Colonic mucosa (tissue), 4 donors: ENCODE measurements at regions of chr2 and their contacts with region 1.

Region 1: DNA sequence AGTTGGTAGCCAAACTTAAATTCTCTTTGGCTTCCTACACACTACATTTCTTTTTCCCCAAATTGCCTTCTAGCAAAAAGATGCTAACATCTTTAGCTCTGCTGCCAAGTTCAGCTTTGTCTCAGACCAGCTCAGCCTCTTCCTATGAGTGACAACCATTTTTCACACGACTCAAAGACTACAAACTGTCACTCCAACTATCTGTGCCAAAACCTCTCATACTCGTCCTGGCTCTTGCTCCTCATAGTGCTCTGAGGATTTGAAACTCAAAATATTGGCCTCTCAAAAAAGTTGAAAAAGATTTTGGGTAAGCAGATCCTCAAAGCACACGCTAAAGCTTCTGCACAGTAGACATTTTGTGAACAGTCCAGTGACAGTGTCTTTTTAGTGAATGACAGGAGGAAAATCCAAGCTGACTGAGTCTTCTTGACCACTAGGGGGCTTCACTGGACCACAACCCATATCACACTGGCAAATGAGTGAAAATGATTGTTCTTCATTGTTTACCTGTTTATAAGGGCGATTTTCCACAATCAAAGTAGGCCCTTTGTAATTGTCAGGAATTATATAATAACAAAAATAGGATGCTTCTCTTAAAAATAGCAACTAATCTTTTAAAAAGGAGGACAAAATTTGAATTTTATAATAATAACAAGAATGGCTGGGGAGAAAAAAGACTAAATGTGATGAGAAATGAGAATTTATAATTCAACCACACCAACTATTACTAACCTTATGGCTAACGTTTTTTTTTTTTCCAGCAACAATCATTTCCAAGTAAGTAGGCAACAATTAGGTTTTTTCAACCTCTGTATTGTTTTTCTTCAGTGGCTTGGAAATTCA is 85.5 kb upstream of the PGAP1 start:
- DNase-seq: no peak
- H3K4me3 ChIP-seq: no peak overlapping the region
- H3K27ac ChIP-seq: no peak overlapping the region
- H3K4me1 ChIP-seq: no peaks in the 10 kb centered on the region
- H3K27me3 ChIP-seq: no peaks in the 10 kb centered on the region
- CTCF ChIP-seq: peak; percentile 83

Region 2: DNA sequence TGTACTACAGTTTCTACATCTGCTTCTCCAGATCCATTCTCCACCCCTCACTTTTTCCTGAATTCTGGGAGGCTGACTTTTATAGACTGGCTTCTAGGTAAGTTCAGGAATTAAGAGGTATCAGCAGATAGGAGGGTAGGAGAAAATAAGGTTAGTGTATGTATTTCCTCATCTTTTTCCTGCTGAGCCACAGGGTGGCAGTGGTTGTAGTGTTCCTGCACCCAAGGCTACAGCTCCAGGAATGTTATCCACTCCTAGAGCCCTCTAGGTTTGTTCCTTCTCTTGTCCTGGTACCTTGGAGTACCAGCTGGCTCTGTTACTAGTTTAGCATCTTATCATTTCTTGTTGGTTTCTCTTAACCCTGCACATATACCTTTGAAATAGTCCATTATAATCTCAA is 162.1 kb before region 1 on chr2:
- intact Hi-C with region 1: loop called (anchors 10 kb)
- DNase-seq: peak; percentile 47
- H3K4me3 ChIP-seq: no peak overlapping the region
- H3K27ac ChIP-seq: no peak overlapping the region
- H3K4me1 ChIP-seq: no peaks in the 10 kb centered on the region
- H3K27me3 ChIP-seq: no peaks in the 10 kb centered on the region
- CTCF ChIP-seq: peak; percentile 33

Region 3: DNA sequence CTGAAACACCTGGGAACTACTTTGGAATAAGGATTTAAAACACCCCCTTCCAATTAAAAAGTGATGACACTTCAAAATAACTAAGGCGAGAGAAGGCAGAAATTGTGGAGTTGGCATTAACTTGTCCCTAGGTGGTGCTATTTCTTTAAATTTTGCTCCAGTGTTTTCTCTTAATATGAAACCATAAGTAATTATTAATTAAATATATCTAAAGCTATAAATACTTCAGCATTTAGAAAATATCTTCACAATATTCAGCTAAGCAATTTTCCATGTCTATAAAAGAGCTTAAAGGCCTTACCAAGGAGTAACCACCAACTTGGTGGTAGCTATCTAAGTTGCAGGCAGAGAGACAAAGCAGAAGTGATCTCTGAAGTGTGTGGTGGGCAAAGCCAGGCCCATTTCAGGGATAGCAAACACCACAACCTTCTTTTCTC is 101.3 kb after region 1 on chr2:
- intact Hi-C with region 1: loop called (anchors 5 kb)
- DNase-seq: no peak
- H3K4me3 ChIP-seq: no peak overlapping the region
- H3K27ac ChIP-seq: no peak overlapping the region
- H3K4me1 ChIP-seq: no peaks in the 10 kb centered on the region
- H3K27me3 ChIP-seq: no peaks in the 10 kb centered on the region
- CTCF ChIP-seq: peak; percentile 60

Region 4: DNA sequence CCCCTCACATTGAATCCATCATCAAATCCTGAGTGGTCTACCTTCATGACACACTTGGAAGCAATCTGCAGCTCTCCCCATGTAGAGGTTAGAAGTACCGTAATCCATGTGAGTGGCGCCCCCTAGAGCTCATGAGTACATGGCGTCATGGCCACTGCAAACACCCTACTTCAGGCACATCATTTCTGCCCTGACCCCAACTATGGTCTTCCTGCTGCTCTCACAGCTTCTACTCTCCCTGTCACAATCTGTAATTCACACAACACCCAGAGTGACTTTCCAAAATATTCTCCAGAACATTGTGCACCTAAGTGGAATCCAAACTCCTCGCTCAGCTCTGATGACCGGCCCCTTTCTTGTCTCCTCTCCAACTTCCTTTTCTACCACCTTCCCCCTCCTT is 156.7 kb after region 1 on chr2:
- intact Hi-C with region 1: loop called (anchors 10 kb)
- DNase-seq: peak; percentile 84
- H3K4me3 ChIP-seq: no peak overlapping the region
- H3K27ac ChIP-seq: no peak overlapping the region
- H3K4me1 ChIP-seq: no peaks in the 10 kb centered on the region
- H3K27me3 ChIP-seq: no peaks in the 10 kb centered on the region
- CTCF ChIP-seq: peak; percentile 61

Region 5: GRCh38 chr2:197378494-197379307 is 366.7 kb after region 1 on chr2:
- intact Hi-C with region 1: loop called (anchors 5 kb)
- DNase-seq: peak; percentile 53
- H3K4me3 ChIP-seq: no peak overlapping the region
- H3K27ac ChIP-seq: no peak overlapping the region
- H3K4me1 ChIP-seq: no peaks in the 10 kb centered on the region
- H3K27me3 ChIP-seq: no peaks in the 10 kb centered on the region
- CTCF ChIP-seq: peak; percentile 63